Aorta (tissue), 5 donors: ENCODE measurements at regions of chr18 and their contacts with region 1.

Region 1: DNA sequence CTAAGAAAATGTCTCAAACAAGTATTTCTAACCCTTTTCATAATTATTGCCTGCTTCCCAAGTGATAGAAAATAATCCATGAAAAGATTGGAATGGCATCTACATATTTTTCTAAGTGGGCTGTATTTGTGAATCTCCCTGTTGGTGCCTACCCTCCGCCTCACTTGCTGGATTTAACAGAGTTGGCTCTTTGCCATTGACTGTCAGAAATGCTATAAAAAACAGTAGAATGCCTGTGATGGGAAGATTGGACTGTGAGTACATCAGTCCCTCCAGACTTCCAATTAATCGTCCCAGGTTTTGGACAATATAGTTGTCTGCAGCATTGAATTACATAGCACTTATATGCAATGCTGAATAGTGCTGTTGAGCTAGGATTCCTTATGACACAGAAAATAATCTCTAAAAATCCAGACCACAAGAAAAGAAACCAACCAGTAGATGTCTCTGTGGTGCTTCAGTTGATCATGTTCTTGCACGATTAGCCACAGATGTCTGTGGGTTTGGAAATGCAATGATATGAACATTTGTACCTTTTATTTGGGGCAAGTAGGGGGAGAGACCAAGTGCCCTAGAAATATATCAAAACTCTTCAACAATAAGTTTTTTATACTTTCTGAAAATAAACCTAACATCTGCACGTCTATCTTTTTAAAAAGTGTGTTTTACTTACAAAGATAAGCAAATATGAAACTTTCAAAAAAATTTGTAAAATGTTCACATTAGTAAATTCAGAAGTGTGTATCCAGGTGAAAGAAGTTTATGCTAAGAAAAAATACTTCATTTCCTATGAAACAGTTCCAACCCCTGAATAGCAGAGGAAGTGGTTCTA is 88.5 kb downstream of the DYNAP start:
- DNase-seq: no peak
- ATAC-seq: no peak
- H3K4me3 ChIP-seq: no peak overlapping the region
- H3K27ac ChIP-seq: no peak overlapping the region
- H3K4me1 ChIP-seq: no peaks in the 10 kb centered on the region
- H3K27me3 ChIP-seq: no peaks in the 10 kb centered on the region

Region 2: GRCh38 chr18:54717673-54718407 is 38.3 kb after region 1 on chr18:
- intact Hi-C with region 1: no loop called
- DNase-seq: no peak
- ATAC-seq: no peak
- H3K4me3 ChIP-seq: no peak overlapping the region
- H3K27ac ChIP-seq: no peak overlapping the region
- H3K4me1 ChIP-seq: no peaks in the 10 kb centered on the region
- H3K27me3 ChIP-seq: peaks cover 0 to 1% of the 10 kb centered on the region in 2 donors

Region 3: DNA sequence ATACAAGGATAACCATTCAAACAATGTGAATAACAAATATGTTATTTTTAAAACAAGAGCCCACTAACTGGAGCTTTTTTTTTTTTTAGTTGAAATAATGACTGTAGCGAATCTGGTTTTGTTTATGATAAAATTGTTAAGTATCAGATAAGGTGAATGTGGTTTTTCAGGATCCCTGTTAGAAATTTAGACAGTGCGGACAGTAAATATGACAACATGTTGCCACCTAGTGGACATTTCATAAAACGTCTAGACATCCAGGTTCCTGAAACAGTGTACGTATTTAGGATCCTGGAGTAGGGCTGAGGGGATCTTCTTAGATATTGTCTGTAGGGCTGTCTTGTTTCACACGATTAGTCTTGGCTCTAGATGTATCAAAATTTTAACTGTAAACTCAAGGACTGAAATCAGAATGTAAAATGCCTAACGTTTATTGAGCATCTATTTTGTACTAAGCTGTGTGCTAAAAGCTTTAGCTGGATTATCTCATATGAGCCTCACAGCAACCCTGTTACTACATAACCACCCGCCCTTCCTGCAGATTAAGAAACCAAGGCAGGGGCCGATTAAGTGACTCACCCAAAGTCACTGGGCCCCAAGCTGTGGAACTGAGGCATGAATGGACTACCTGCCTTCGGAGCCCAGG is 303.6 kb after region 1 on chr18:
- intact Hi-C with region 1: loop called in 1 of 2 experiments (anchors 10 kb)
- DNase-seq: no peak
- ATAC-seq: no peak
- H3K4me3 ChIP-seq: no peak overlapping the region
- H3K27ac ChIP-seq: no peak overlapping the region
- H3K4me1 ChIP-seq: no peaks in the 10 kb centered on the region
- H3K27me3 ChIP-seq: no peaks in the 10 kb centered on the region